ENCODE measurements at regions of chr2 and their contacts with region 1.

Region 1: DNA sequence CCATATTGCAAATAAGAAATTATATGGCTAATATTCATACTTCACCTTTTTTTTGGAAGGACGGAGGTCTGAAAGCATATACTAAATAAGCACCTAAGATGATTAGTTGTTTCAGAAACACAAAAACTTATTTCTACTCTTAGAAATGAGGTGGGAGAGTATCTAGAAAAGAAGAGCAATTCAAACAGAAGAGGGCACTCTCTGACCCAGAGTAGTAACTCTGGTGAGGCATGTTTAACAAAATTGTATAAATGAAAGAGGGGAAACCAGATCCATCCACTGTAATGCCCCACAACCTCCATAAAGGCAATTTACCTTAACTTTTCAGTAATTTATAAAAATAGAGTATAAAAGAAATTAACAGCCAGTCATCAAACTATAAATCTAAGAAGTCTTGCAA is 669.6 kb upstream of the VRK2 start:
- DNase-seq: no peak
- ATAC-seq: no peak
- H3K4me3 Mint-ChIP-seq: no peak overlapping the region
- H3K27ac Mint-ChIP-seq: no peak overlapping the region
- H3K4me1 Mint-ChIP-seq: no peaks in the 10 kb centered on the region
- H3K27me3 Mint-ChIP-seq: no peaks in the 10 kb centered on the region

Region 2: GRCh38 chr2:57330447-57330846 is 46.5 kb before region 1 on chr2:
- CTCF ChIA-PET with region 1: no interaction called
- POLR2A ChIA-PET with region 1: no interaction called
- intact Hi-C with region 1: no loop called
- DNase-seq: no peak
- ATAC-seq: no peak
- H3K4me3 Mint-ChIP-seq: no peak overlapping the region
- H3K27ac Mint-ChIP-seq: no peak overlapping the region
- H3K4me1 Mint-ChIP-seq: no peaks in the 10 kb centered on the region
- H3K27me3 Mint-ChIP-seq: no peaks in the 10 kb centered on the region

Region 3: DNA sequence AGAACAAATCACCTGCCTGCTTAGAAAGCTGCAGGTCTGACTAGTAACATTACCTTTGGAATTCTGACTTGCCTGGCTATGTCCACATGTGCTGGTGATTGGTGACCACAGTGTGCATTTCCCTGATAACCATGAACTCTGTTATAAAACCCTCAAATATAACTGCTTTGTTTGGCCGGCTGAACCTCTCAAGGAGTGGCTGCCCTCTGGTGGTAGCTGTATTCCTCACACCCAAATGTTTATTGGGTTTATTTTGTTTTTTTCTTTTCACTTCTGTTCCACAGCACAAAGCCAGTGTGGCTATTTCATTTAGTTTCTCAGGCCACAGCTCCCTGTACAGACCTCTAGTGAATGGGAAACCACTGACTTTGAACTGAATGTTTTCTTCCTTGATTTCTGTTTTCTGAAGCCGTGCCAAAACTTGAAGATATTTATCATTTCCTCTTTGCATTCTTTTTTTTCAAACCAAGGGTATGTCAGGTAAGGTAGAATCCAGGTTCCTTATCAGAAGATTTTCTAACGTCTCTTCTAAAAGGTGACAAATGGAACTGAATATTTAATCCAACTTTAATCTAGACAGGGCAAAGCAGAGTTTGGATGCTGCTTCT is 120.6 kb after region 1 on chr2:
- CTCF ChIA-PET with region 1: no interaction called
- POLR2A ChIA-PET with region 1: no interaction called
- intact Hi-C with region 1: loop called in 1 of 2 experiments (anchors 2 kb)
- DNase-seq: peak; percentile 55
- ATAC-seq: peak; percentile 26
- H3K4me3 Mint-ChIP-seq: no peak overlapping the region
- H3K27ac Mint-ChIP-seq: no peak overlapping the region
- H3K4me1 Mint-ChIP-seq: no peaks in the 10 kb centered on the region
- H3K27me3 Mint-ChIP-seq: no peaks in the 10 kb centered on the region

Region 4: GRCh38 chr2:58266211-58266610 is 889.2 kb after region 1 on chr2:
- CTCF ChIA-PET with region 1: no interaction called
- POLR2A ChIA-PET with region 1: no interaction called
- intact Hi-C with region 1: no loop called
- DNase-seq: no peak
- ATAC-seq: no peak
- H3K4me3 Mint-ChIP-seq: no peak overlapping the region
- H3K27ac Mint-ChIP-seq: no peak overlapping the region
- H3K4me1 Mint-ChIP-seq: no peaks in the 10 kb centered on the region
- H3K27me3 Mint-ChIP-seq: peaks cover 2% of the 10 kb centered on the region